ENCODE measurements at regions of chr19 and their contacts with region 1.

Region 1: DNA sequence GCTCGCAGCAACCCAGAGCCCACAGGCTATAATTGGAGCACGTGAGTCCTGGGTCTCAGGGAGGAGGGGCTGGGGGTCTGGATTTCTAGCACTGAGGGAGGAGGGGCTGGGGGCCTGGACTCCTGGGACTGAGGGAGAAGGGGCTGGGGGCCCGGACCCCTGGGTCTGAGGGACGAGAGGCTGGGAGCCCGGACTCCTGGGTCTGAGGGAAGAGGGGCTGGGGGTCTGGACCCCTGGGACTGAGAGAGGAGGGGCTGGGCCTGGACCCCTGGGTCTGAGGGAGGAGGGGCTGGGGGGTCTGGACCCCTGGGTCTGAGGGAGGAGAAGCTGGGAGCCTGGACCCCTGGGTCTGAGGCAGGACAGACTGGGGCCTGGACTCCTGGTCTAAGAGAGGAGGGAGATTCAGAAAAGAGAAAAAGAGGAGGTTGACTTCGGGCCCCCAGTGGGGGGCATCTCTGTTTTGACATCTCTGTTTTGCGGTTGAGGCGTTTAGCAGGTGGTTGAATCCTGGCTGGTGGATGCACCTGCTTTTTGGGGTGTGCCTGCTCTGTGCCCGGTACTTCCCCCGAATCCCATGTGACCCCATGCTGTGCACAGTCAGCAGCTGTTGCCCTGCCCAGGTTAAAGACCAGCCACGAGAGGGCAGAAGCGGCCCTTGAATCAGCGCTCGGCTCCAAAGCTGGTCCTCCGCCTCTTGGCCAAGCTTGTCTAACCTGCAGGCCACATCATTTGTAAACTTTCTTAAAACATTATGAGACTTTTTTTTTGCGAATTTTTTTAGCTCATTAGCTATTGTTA is 10.5 kb downstream of the PVR start:
- DNase-seq: peak; percentile 78
- ATAC-seq: peak; percentile 71 to 79

Region 2: DNA sequence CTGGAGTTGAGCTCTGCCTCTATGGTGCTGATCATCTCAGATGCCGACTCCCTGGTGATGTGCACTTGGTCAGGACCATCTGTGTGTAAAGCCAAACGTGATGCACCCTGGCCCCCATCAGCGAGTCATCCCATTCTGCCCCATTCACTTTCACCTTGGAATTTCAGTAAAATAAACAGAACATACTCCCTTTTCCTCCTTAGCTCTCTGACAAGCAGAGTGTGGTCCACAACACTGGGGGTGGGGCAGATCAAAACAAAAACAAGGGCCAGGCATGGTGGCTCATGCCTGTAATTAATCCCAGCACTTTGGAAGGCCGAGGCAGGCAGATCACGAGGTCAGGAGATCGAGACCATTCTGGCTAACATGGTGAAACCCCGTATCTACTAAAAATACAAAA is 137.0 kb before region 1 on chr19:
- intact Hi-C with region 1: no loop called
- DNase-seq: no peak
- ATAC-seq: no peak

Region 3: DNA sequence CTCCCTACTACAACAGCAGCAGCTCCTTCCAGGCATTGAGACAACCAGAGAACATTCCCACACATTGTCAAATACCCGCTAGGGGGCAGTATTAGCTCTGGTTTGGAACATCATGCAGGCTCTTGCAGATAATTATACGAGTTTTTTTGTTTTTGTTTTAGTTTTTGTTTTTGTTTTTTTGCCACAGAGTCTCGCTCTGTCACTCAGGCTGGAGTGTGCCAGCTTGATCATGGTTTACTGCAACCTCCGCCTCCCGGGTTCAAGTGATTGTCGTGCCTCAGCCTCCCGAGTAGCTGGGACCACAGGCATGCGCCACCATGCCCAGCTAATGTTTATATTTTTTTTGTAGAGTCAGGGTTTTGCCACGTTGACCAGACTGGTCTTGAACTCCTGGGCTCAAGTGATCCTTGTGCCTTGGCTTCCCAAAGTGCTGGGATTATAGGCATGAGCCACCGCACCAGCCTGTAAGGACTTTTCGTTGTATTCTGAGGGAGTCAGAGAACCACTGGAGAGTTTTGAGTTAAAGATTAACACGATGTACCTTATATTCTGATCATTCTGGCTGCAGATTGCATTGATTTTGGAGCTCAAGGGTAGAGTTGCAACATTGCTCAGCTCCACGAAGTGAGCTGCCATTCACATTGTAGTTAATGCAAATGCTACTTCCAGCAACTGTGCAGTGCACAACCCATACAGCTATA is 83.0 kb before region 1 on chr19:
- intact Hi-C with region 1: loop called (anchors 1 to 5 kb)
- DNase-seq: peak; percentile 49
- ATAC-seq: peak; percentile 84

Region 4: GRCh38 chr19:44587963-44588770 is 66.0 kb before region 1 on chr19:
- intact Hi-C with region 1: loop called in 1 of 2 experiments (anchors 5 kb)
- DNase-seq: no peak
- ATAC-seq: peak; percentile 34 to 80

Region 5: GRCh38 chr19:44746946-44747738 is 93.0 kb after region 1 on chr19:
- intact Hi-C with region 1: no loop called
- DNase-seq: peak; percentile 97
- ATAC-seq: peak; percentile 92 to 94

Region 6: GRCh38 chr19:44856421-44857083 is 202.4 kb after region 1 on chr19:
- intact Hi-C with region 1: no loop called
- DNase-seq: peak; percentile 51
- ATAC-seq: peak; percentile 30 to 67

Measured in left cardiac atrium (tissue), 4 donors.